Caco-2 (cell line): ENCODE measurements at regions of chr21 and their contacts with region 1.

Region 1: DNA sequence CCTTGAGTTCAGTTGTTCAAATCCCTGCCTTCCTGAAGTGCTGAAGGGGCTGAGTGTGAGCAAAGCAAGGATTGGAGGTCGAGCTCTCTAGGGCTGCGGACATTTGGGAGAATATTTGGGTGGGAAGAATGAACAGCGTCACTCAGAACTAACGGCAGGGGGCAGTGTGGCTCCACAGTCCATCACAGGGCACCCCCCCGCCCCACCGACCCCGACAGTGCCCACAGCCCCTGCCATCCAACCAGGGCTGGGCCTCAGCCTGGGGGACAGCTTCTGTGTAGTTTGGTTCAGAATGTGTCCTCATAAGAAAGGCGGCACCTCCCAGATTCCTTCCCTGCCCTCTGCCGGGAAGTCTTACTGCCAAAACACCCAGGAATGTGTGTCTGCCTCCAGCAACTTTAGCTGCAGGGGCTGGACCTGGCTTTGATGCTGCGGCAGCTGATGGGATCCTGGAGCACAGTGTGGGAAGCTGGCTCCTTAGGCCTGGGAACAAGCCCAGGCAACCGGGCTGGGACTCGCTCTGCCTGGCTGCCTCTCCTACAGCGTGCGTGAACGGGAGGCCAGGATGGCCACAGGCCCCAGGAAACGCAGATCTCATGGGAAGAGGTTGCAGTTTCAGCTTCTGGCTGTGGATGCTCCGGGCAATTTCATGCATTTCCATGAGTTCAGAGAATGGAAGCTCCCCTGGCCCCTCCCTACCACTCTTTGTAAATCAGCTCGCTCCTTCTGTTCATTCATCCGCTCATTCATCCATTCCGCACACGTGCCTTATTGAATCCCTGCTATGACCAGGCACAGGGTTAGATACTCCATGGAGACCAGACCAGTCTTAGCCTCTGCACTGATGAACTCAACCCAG is 104.9 kb upstream of the TMPRSS2 start:
- DNase-seq: peak; percentile 74 to 82
- H3K4me3 ChIP-seq: 0 out of 2 replicates have a peak overlapping the region, but pooled peaks have one; percentile 2
- H3K4me3 Mint-ChIP-seq: peak overlapping the region; percentile 60
- H3K27ac Mint-ChIP-seq: peak overlapping the region; percentile 63
- H3K4me1 ChIP-seq: peaks cover 30% of the 10 kb centered on the region
- H3K4me1 Mint-ChIP-seq: peaks cover 18% of the 10 kb centered on the region
- H3K27me3 ChIP-seq: no peaks in the 10 kb centered on the region
- H3K27me3 Mint-ChIP-seq: no peaks in the 10 kb centered on the region
- CTCF ChIP-seq: peak; percentile 73 to 90

Region 2: GRCh38 chr21:41593051-41593759 is 19.7 kb before region 1 on chr21:
- CTCF ChIA-PET with region 1: interaction called, 8 read pairs
- POLR2A ChIA-PET with region 1: no interaction called
- intact Hi-C with region 1: loop called (anchors 2 kb)
- DNase-seq: peak; percentile 84 to 85
- H3K4me3 ChIP-seq: no peak overlapping the region
- H3K4me3 Mint-ChIP-seq: peak overlapping the region; percentile 15
- H3K27ac Mint-ChIP-seq: peak overlapping the region; percentile 93
- H3K4me1 ChIP-seq: peaks cover 47% of the 10 kb centered on the region
- H3K4me1 Mint-ChIP-seq: peaks cover 39% of the 10 kb centered on the region
- H3K27me3 ChIP-seq: no peaks in the 10 kb centered on the region
- H3K27me3 Mint-ChIP-seq: no peaks in the 10 kb centered on the region
- CTCF ChIP-seq: no peak

Region 3: DNA sequence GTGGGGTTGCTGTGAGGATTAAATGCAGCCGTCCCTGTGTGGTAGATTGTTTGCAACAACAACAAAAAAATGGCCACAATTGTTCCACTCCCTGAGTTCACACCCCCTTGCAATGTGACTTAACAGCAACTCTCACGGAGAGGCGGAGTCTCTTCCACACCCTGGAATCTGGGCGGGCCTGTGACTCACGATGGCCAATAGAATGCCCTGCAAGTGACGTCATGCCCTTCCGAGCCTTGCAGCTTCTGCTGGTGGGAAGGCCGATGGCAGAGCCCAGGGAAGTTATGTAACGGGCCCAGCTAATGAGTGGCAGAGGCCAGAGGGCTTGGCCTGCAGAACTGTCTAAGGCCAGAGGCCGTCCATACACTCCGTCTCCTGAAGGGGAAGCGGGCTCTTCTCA is 66.0 kb after region 1 on chr21:
- CTCF ChIA-PET with region 1: interaction called, 29 read pairs
- POLR2A ChIA-PET with region 1: interaction called, 4 read pairs
- intact Hi-C with region 1: loop called (anchors 2 kb)
- DNase-seq: peak; percentile 96 to 99
- H3K4me3 ChIP-seq: peak overlapping the region; percentile 29
- H3K4me3 Mint-ChIP-seq: peak overlapping the region; percentile 74
- H3K27ac Mint-ChIP-seq: peak overlapping the region; percentile 96
- H3K4me1 ChIP-seq: peaks cover 32% of the 10 kb centered on the region
- H3K4me1 Mint-ChIP-seq: peaks cover 2% of the 10 kb centered on the region
- H3K27me3 ChIP-seq: no peaks in the 10 kb centered on the region
- H3K27me3 Mint-ChIP-seq: no peaks in the 10 kb centered on the region
- CTCF ChIP-seq: no peak

Region 4: GRCh38 chr21:41752231-41752681 is 139.4 kb after region 1 on chr21:
- CTCF ChIA-PET with region 1: interaction called, 23 read pairs
- POLR2A ChIA-PET with region 1: no interaction called
- intact Hi-C with region 1: no loop called
- DNase-seq: no peak
- H3K4me3 ChIP-seq: no peak overlapping the region
- H3K4me3 Mint-ChIP-seq: peak overlapping the region; percentile 1
- H3K27ac Mint-ChIP-seq: peak overlapping the region; percentile 39
- H3K4me1 ChIP-seq: peaks cover 39% of the 10 kb centered on the region
- H3K4me1 Mint-ChIP-seq: peaks cover 28% of the 10 kb centered on the region
- H3K27me3 ChIP-seq: no peaks in the 10 kb centered on the region
- H3K27me3 Mint-ChIP-seq: no peaks in the 10 kb centered on the region
- CTCF ChIP-seq: no peak

Region 5: GRCh38 chr21:41777951-41778874 is 165.3 kb after region 1 on chr21:
- CTCF ChIA-PET with region 1: interaction called, 46 read pairs
- POLR2A ChIA-PET with region 1: no interaction called
- intact Hi-C with region 1: loop called (anchors 1 kb)
- DNase-seq: peak; percentile 90 to 92
- H3K4me3 ChIP-seq: no peak overlapping the region
- H3K4me3 Mint-ChIP-seq: peak overlapping the region; percentile 35
- H3K27ac Mint-ChIP-seq: no peak overlapping the region
- H3K4me1 ChIP-seq: peaks cover 19% of the 10 kb centered on the region
- H3K4me1 Mint-ChIP-seq: peaks cover 26% of the 10 kb centered on the region
- H3K27me3 ChIP-seq: no peaks in the 10 kb centered on the region
- H3K27me3 Mint-ChIP-seq: no peaks in the 10 kb centered on the region
- CTCF ChIP-seq: peak; percentile 88 to 89